Cardiac septum (tissue), 1 donor: ENCODE measurements at regions of chr4 and their contacts with region 1.

Region 1: DNA sequence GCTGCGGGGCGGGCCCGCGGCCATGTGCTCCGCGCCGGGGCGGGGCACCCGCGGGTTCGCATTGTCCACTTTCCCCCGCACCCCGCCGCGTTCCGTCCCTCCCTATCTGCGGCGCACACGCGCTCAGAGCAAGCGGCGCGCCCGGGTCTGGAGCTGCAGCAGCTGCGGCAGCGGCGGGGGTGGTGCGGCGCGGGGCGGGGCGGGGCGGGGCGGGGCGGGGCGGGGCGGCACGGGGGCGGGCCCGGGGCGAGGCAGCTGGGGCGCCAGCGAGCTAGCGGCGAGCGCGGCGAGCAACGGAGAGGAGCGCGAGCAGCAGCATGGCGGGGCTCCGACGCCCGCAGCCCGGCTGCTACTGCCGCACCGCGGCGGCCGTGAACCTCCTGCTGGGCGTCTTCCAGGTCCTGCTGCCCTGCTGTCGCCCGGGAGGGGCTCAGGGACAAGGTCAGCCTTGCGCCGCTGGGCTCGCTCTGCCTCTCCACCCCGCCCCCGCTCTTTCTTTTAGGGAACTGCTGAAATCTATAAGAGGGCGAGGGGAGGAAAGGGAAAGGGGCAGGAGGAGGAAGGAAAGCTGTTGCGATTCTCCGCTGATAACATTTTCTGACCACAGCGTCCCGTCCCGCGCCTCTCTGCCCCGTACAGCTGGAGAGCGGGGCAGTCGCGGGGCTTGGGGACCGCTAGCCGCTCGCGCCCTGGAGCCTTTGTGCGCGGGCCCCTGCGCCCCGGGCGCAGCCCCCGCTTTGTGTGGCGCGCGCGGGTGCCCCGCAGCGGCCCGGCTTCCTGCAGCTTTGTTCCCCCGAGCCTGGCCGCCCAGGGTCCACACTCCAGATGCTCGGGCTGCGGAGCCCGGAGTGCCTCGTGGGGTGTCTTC is at the start of gene TMEM131L:
- DNase-seq: peak; percentile 91
- total RNA-seq, gene TMEM131L: 21.2 TPM

Region 2: GRCh38 chr4:153221783-153222706 is 244.3 kb before region 1 on chr4:
- intact Hi-C with region 1: loop called (anchors 10 kb)
- DNase-seq: peak; percentile 82

Region 3: DNA sequence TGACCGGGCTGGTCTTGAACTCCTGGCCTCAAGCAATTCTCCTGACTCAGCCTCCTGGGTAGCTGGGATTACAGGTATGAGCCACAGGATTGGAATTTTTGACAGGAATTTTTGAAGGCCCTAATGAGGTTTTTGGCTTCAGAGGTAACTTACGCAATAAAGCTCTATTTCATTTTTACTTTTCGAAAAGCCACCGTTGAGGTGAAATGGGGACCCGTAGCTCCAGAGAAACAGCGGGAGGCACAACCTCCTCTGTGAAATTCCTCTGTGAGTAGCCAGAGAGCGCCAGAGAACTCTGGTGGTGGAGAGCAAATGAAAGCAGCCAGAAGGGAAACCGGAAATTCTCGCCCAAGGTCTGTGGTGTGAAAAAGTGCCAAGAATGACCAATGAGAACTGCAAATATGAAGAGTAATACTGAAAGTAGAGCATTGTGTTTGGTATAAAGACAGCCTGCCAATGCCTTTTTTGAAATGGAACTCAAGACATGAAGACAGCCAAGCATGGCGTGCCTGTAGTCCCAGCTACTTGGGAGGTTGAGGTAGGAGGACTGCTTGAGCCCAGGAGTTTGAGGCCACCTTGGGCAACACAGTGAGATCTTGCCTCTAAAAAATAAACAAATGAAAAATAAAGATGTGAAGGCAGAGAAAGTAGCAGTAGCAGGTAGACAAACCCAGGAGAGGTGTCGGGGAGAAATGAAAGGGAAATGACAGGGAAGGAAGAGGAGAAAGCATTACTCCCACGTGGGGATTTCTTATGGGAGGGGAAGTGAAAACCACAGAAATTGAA is 33.2 kb before region 1 on chr4:
- intact Hi-C with region 1: loop called (anchors 5 kb)
- DNase-seq: peak; percentile 81

Region 4: DNA sequence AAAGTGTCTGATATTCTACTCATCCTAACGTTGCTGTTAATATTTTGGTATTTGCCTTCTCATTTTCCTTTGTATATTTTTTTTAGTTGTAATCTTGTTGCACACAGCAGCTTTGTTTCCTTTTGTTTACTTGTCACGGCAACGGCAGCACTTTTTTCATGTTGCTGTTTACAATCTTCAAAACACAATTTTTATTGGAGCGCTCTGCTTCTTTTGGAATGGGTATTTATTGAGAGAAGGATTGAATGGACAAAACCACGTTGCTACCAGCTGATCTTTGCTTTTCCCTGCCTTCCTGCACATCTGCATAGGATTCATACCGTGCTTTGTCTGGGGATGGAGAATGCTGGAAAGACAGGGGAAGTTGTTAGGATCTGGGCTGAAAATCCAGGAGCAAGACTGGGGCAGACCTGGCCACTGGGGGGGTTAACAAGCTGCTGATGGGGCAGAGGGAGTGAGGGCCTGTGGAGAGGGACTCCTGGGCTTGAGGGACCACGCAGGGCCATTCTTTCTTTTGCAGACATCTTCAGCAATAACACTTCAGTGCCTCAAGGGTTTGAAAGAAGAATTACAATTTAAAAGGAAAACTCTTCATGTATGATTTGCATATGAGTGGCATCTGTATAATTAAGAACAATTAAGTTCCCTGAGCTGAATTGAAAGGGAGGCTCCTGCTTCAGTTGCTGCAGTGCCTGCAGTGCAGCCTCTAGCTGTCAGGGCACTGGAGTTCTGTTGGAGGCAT is 69.6 kb after region 1 on chr4:
- intact Hi-C with region 1: loop called (anchors 5 kb)
- DNase-seq: no peak

Region 5: DNA sequence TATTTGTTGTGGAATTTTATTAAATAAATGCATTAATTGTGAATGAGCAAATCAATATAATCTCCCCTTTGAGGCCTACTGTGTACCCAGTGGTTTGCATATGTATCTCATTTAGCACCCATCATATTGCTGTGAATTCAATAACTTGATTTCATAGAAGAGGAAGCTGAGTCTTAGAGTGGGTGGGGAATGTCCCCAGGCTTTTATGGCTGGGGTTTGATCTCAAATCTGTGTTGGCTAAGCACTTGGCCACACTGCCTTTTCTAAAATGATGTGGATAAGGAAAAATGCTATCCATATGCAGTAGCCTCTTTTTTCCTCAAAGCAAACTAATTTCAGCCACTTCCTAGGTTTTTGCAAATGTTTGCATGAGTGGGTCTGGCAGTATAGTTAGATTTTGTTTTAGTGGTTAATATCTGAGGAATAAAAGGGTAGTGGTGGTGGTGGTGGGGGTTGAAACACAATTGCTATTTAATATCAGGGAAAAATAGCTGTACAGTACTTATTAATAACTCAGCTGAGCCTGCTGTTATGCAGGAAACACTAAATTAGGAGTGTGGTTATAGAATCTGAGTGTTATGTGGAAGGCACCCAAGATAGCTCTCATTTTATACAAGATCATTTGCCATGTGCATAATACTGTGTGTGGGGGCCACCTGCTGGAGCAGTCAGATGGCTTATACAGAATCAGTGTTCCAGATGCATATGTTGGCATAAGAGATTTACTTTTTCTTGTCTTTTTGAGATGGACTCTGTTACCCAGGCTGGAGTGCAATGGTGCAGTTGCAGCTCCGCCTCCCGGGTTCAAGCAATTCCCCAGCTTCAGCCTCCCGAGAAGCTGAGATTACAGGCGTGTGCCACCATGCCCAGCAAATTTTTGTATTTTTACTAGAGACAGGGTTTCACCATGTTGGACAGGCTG is 107.8 kb after region 1 on chr4:
- intact Hi-C with region 1: loop called (anchors 1 kb)
- DNase-seq: no peak